Mucosa of descending colon (tissue), 3 donors: ENCODE measurements at regions of chr1 and their contacts with region 1.

Region 1: GRCh38 chr1:147242439-147243227 is at the start of gene CHD1L:
- DNase-seq: peak; percentile 97 to 99 (median 99)
- ATAC-seq: peak; percentile 96
- H3K4me3 ChIP-seq: peak within 1 kb of the TSS; percentile 88
- H3K4me1 ChIP-seq: peaks cover 22% of the 10 kb centered on the region
- CTCF ChIP-seq: peak; percentile 84
- total RNA-seq, gene CHD1L: 33.8 to 40.0 (median 34.5) TPM

Region 2: DNA sequence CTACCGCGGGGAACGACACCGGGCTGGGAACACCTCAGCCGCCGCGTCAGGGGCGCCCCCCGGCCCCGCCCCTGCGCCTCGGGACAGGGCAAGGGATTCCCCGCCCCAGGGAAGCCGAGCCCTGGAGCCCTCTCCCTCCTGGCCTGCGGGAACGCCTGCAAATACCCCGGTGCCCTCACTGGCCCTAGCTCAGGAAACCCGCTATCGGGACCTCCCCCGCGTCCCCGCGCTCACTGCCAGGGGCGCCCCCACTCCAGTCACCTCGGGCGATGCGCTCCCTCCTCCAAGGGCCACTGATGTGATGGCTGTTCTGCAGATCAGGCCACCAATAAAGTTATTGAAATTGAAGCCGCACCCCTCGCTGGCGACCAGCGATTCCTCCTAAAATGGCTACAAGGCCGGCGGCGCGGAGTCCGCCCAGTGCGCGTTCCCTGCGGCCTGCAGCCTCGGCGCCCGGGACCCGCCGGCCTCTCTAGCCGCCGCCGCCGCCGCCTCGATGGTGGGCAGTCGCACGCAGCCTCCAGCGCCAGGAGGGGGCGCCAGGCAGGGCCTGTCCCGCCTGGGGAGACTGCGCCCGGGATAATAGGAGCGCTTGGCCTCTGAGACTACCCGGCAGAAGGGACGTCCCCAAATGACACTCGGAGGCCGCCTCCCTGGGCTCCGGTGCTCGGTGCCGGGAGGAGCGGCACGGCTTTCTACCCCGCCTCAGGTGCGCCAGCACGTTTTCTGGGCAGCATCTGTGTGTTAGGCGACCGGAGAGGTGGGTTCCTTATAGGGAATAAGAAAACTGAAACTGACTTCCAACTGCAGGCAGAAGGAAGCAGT is 70.3 kb before region 1 on chr1 and contains the start of gene PRKAB2:
- intact Hi-C with region 1: loop called (anchors 2 to 5 kb)
- DNase-seq: peak; percentile 97 to 99 (median 97)
- ATAC-seq: peak; percentile 95
- H3K4me3 ChIP-seq: peak within 1 kb of the TSS; percentile 80
- H3K4me1 ChIP-seq: peaks cover 41% of the 10 kb centered on the region
- CTCF ChIP-seq: peak; percentile 94
- total RNA-seq, gene PRKAB2: 16.6 to 27.2 (median 20.2) TPM

Region 3: DNA sequence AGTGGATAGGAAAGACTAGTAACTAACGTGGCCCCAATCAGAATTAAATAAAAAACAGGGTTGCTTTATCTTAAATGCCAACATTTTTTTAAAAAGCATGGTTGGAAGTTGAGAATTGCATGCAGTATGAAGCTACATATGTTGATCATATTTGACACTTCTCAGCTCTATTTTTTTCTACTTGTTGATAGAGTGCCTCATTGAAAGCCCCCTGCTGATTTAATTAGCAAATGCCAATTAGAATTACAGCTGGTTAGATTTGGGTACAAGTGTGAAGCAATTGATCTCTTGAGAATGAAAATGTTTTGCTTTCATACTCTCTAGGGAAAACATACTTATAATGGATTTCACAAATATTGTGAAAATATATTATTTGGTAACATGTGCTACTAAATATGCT is 40.4 kb after region 1 on chr1:
- intact Hi-C with region 1: no loop called
- DNase-seq: no peak
- ATAC-seq: no peak
- H3K4me3 ChIP-seq: no peak overlapping the region
- H3K4me1 ChIP-seq: no peaks in the 10 kb centered on the region
- CTCF ChIP-seq: no peak